ENCODE measurements at regions of chr18 and their contacts with region 1.

Region 1: GRCh38 chr18:11851146-11851805 is at the start of gene CHMP1B:
- DNase-seq: peak; percentile 99 to 100 (median 99)
- ATAC-seq: peak; percentile 97
- H3K4me3 ChIP-seq: peak within 1 kb of the TSS; percentile 54
- H3K4me1 ChIP-seq: peaks cover 18% of the 10 kb centered on the region
- CTCF ChIP-seq: no peak
- total RNA-seq, gene CHMP1B: 60.9 to 88.3 (median 66.7) TPM

Region 2: DNA sequence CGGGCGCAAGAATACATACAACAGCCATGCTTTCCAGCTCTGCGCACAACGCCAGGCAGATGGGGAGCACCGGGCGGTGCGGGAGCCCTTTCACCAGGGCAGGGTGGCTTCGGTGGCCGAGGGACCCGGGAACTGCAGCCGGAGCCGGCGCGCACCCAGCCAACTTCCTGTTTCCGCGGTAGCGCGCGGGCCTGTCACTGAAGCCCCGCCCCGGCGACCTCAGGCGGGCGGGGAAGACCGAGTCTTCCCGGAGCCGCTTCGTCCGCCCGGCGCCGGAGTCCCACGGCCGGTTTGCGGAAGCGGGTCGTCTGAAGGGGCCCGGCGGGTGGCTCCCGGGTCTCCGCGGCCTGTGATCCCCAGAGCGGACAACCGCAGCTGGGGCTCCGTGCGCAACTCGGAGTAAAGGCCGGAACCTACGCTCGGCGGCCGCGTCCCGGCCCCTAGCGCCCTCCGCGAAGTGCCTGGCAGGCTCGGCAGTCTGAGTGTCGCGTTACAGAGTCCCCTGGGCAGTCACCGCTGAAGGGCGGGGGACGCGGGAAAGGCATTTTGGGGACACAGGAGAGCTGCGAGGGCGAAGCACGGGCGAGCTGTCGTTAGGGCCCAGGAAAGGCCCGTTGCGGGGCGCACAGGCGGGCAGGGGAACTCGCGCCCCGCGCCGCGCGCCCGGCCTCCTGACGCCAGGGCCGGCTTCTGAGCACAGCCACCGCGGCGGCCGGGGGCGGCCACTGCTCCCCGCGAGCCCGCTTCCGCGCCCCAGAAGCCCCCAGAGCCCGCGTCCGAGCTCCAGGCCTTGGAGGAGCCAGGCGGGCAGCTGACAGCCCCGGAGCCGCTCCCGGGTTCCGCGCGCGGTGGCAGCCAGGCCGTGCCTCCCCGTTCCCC is 57.1 kb after region 1 on chr18 and contains the start of gene MPPE1:
- intact Hi-C with region 1: loop called (anchors 10 kb)
- DNase-seq: peak; percentile 92 to 95 (median 94)
- ATAC-seq: peak; percentile 96
- H3K4me3 ChIP-seq: peak within 1 kb of the TSS; percentile 64
- H3K4me1 ChIP-seq: peaks cover 7% of the 10 kb centered on the region
- CTCF ChIP-seq: no peak
- total RNA-seq, gene MPPE1: 56.7 to 103 (median 68.8) TPM